CD8-positive, alpha-beta memory T cell (primary cell): ENCODE measurements at regions of chr20 and their contacts with region 1.

Region 1: DNA sequence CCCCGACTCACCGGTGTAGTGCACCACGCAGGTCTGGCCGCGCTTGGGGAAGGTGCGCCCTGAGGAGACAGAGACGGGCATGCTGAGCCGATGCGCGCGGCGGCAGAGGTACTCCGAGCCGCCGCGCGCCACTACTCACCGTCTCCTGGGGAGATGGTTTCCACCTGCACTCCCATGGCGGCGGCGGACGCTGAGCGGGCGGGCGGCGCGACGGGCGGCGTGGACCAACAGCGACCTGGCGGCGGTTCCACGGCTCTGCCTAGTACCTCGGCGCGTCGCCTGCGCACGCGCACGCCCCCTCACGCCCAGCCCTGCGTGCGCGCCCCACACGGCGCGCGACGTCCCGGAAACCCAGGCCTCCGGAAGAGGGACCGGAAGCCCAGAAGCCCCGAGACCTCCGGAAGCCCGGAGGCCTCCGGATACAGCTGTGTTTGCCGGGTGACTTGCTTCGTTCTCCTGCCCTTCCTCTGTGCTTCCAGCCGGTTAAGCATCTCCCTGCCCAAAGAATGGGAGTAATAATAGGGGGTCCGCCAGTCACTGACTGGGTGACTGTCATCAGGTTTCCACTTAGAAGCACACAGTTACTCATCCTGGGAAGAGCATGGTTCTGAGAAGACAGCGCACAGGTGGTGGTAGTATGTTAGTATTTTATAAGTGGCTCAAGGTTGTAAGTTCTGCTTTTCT is at the start of gene FKBP1A:
- DNase-seq: peak; percentile 83 to 95 (median 87)
- H3K4me3 ChIP-seq: peak within 1 kb of the TSS; percentile 95
- H3K4me3 Mint-ChIP-seq: peak within 1 kb of the TSS; percentile 79 to 97 (median 92)
- H3K27ac ChIP-seq: peak within 1 kb of the TSS; percentile 76
- H3K27ac Mint-ChIP-seq: peak within 1 kb of the TSS; percentile 80 to 98 (median 94)
- H3K4me1 ChIP-seq: peaks cover 53% of the 10 kb centered on the region
- H3K4me1 Mint-ChIP-seq: peaks cover 51 to 57% (median 52%) of the 10 kb centered on the region in 3 donors
- H3K27me3 ChIP-seq: no peaks in the 10 kb centered on the region
- H3K27me3 Mint-ChIP-seq: peaks cover 11 to 17% of the 10 kb centered on the region in 2 donors
- total RNA-seq, gene FKBP1A: 274 TPM

Region 2: GRCh38 chr20:1232286-1233111 is 160.5 kb before region 1 on chr20:
- CTCF ChIA-PET with region 1: no interaction called
- POLR2A ChIA-PET with region 1: no interaction called
- DNase-seq: no peak
- H3K4me3 ChIP-seq: no peak overlapping the region
- H3K4me3 Mint-ChIP-seq: no peak overlapping the region
- H3K27ac ChIP-seq: no peak overlapping the region
- H3K27ac Mint-ChIP-seq: no peak overlapping the region
- H3K4me1 ChIP-seq: no peaks in the 10 kb centered on the region
- H3K4me1 Mint-ChIP-seq: peaks cover 0 to 2% (median 1%) of the 10 kb centered on the region in 3 donors
- H3K27me3 ChIP-seq: peaks cover 9% of the 10 kb centered on the region
- H3K27me3 Mint-ChIP-seq: peaks cover 10 to 20% of the 10 kb centered on the region in 2 donors

Region 3: DNA sequence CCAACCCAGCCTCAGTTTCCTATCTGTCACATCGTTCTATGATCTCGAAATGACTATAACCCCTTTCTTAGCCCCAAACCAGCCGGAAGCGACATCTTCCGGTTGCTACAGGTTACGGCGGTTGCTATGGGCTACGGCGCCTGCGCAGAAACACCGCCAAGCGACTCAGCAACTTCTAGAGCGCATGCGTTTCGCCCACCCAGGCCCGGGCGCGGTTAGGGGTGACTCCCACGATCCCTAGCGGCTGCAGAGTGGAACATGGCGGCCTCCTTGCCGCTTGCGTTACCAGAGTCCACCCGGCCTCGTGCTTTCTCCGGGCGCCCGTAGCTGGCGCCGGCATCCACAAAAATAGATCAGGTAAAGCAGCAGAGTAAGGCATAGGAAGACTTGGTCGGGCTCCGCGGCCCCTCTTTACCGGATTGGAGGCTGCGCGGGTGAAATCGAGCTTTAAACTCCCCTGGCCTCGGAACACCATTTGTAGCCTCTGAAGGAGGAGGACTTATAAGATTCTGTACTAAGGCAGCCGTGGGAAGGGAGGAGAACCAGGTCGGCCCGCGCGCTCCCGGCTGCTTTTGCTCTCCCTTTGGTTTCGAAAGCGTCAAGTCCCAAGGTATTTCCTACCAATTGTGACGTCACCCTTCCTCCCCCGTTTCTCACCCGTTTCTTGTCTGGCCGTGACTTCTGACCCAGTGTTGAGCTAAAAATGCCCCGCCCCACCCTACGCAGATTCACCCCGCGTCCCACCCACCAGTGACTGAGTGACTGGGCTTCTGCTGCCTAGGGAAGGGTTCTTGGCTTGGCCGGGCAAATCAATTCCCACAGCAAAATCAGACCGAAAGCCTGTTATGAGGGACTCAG is 67.6 kb before region 1 on chr20:
- CTCF ChIA-PET with region 1: interaction called, 3 read pairs
- POLR2A ChIA-PET with region 1: interaction called, 14 read pairs
- DNase-seq: peak; percentile 98 to 100 (median 98)
- H3K4me3 ChIP-seq: peak overlapping the region; percentile 99
- H3K4me3 Mint-ChIP-seq: no peak overlapping the region
- H3K27ac ChIP-seq: peak overlapping the region; percentile 99
- H3K27ac Mint-ChIP-seq: no peak overlapping the region
- H3K4me1 ChIP-seq: peaks cover 36% of the 10 kb centered on the region
- H3K4me1 Mint-ChIP-seq: peaks cover 14 to 26% (median 15%) of the 10 kb centered on the region in 3 donors
- H3K27me3 ChIP-seq: no peaks in the 10 kb centered on the region
- H3K27me3 Mint-ChIP-seq: no peaks in the 10 kb centered on the region

Region 4: DNA sequence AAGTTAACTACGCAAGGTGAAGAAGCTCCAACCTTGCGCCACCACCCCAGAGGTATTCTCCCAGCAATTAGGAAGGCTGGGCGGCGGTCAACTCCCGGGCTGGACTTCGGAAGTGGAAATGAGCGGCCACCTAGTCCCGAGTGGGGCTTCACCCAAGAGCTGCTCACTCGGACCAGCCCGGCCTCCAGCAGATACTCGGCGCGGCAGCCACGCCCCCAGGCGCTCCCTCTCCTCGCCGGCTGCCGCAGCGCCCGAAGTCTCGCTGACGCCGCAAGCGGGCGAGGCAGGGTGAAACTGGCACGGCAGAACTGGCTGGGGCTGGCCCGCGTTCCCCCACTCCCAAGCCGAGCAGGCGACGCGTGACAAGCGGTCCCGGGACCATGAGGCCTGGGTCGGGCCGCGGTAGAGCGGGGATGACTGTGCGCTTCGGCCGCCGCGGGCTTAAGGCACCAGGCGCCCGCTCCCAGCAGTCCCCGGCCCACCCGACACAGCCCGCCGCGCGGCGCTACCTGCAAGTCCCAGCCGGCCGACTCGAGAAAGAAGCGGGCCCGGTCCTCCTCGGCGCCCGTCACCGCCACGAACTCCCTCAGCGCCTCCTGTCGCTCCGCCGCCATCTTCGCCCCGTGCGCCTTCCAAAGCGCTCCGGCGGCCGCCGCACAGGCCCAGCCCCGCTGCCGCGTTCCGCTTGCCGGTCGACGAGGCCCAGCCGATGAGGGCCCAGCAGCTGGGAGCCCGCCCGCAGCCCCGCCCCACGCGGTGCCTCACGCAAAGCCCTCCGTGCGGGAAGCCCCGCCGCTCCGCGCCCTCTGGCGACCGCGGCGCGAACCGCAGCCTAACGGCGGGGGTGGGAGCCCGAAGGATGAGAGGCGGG is 73.5 kb after region 1 on chr20 and contains the start of gene NSFL1C:
- CTCF ChIA-PET with region 1: interaction called, 13 read pairs
- POLR2A ChIA-PET with region 1: no interaction called
- DNase-seq: peak; percentile 95 to 98 (median 97)
- H3K4me3 ChIP-seq: peak within 1 kb of the TSS; percentile 62
- H3K4me3 Mint-ChIP-seq: peak within 1 kb of the TSS; percentile 85 to 91 (median 89)
- H3K27ac ChIP-seq: peak within 1 kb of the TSS; percentile 70
- H3K27ac Mint-ChIP-seq: peak within 1 kb of the TSS; percentile 81 to 93 (median 88)
- H3K4me1 ChIP-seq: peaks cover 35% of the 10 kb centered on the region
- H3K4me1 Mint-ChIP-seq: peaks cover 43 to 56% (median 51%) of the 10 kb centered on the region in 3 donors
- H3K27me3 ChIP-seq: no peaks in the 10 kb centered on the region
- H3K27me3 Mint-ChIP-seq: peaks cover 0 to 8% of the 10 kb centered on the region in 2 donors
- total RNA-seq, gene NSFL1C: 103 to 107 TPM

Region 5: GRCh38 chr20:1830240-1830639 is 437.3 kb after region 1 on chr20:
- CTCF ChIA-PET with region 1: no interaction called
- POLR2A ChIA-PET with region 1: no interaction called
- DNase-seq: no peak
- H3K4me3 ChIP-seq: no peak overlapping the region
- H3K4me3 Mint-ChIP-seq: no peak overlapping the region
- H3K27ac ChIP-seq: no peak overlapping the region
- H3K27ac Mint-ChIP-seq: no peak overlapping the region
- H3K4me1 ChIP-seq: no peaks in the 10 kb centered on the region
- H3K4me1 Mint-ChIP-seq: no peaks in the 10 kb centered on the region
- H3K27me3 ChIP-seq: no peaks in the 10 kb centered on the region
- H3K27me3 Mint-ChIP-seq: peaks cover 11 to 38% of the 10 kb centered on the region in 2 donors